ENCODE measurements at regions of chr12 and their contacts with region 1.

Region 1: DNA sequence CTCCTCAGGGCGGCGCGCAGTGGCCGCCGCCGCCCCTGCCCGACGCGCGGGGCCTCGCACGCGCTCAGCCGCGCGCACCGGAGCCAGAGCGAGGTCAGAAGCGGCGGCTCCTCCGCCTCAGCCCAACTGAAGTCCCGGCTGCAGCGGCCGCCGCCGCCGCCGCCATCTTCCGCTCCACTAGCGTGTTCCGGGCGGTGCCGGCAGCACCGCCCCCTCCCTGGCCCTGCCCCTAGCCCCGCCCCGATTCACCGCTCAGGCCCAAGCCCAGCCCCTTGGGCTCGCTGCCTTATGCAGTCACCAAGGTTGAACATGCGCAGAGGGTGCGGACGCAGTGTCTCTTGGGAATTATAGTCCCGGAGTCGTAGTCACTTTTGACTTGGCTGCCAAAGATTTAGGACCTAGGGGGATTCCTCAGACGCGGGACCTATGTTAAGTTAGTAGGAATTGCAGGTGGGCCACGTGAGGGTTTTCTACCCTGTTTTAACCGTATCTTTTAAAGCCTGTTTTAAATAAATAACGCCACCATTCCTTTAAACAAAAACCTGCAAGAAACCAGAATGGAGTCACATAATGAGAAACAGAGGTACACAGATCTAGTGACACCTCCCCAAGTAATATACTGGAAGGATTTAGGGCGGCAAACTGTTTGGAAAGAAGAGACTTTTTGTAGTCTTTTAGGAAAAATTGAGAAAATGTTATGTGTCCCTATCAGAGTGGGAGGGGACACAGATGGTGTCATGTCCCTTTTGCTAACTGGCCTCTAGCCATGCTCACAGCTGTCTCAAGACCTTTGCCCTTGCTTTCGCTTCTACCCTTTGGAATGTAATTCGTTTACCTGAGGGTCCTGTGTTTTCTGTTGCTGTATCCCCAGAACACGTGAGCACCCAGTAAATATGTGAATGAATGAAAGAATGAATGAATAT is at the start of gene PPTC7:
- DNase-seq: peak; percentile 85
- ATAC-seq: peak; percentile 93
- H3K4me3 Mint-ChIP-seq: peak within 1 kb of the TSS; percentile 90
- H3K27ac Mint-ChIP-seq: peak within 1 kb of the TSS; percentile 87
- H3K4me1 Mint-ChIP-seq: peaks cover 70% of the 10 kb centered on the region
- H3K27me3 Mint-ChIP-seq: no peaks in the 10 kb centered on the region
- CTCF ChIP-seq: no peak
- total RNA-seq, gene PPTC7: 34.5 and 40.8 TPM in 2 replicates

Region 2: DNA sequence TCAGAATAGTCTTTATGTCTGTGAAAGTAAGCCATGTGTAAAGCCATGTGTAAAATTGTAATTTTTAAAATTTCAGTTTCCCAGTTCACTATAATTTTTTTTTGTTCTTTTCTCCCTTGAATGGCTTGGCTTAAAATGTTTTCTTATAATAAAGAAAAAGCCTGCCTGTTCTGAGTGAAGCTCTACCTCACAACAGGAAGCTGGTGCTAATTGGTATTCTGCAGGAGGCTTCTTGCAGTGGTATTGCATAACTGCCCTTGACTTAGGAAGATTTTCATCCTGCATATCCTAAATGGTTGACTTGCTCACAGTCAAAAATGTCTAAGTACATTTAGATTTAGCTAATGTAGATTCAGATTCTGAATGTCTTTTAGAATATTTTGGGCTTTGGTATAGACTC is 252.9 kb before region 1 on chr12:
- CTCF ChIA-PET with region 1: no interaction called
- POLR2A ChIA-PET with region 1: no interaction called
- intact Hi-C with region 1: no loop called
- DNase-seq: no peak
- ATAC-seq: no peak
- H3K4me3 Mint-ChIP-seq: no peak overlapping the region
- H3K27ac Mint-ChIP-seq: no peak overlapping the region
- H3K4me1 Mint-ChIP-seq: no peaks in the 10 kb centered on the region
- H3K27me3 Mint-ChIP-seq: no peaks in the 10 kb centered on the region
- CTCF ChIP-seq: no peak

Region 3: DNA sequence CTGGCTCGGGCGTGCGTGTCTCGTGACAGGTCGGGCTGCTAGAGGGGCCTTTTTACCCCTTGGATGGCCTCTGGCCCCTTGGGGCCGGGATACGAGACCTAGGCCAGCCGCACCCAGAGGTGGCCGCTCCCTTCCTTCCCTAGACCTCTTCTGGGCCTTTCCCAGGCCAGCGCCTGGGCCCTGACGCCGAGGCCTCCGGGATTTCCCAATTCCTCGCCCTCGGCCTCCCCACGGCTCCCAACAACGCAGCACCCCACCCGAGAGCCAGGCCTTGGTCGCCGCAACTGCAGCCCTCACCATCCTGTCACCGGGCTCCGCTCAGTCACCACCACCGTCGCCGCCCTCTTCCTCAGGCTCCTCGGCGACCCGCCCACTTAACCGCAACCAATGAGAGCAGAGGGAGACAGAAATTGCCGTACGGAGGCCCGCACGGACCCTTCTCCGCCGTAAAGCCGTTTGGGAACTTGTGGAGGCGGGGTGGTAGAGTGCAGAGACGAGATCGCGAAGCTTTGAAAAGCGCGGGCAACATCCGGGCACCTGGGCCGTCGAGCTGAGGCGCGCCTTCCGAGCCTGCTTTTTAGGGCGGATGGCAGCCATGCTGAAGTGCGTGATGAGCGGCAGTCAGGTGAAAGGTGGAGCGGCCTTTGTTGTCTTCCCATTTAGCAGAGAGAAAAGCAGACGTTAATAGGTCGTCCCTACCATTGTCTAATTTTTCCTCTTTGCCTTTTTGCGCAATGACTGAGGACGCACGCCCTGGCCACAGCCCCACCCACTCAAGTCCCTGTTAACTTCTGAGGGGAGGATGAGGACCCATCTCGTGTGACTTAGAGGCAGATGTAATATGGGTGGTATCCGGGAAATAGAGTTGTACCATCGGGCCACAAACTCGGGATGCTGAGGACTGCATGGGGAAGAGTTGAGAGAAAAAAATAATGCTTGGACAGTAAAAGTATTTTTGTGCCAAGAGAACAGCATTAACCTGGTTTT is 81.4 kb before region 1 on chr12 and contains the starts of genes RAD9B and VPS29:
- CTCF ChIA-PET with region 1: interaction called, 3 read pairs
- POLR2A ChIA-PET with region 1: interaction called, 7 read pairs
- intact Hi-C with region 1: loop called (anchors 1 kb)
- DNase-seq: peak; percentile 95
- ATAC-seq: peak; percentile 95
- H3K4me3 Mint-ChIP-seq: peak within 1 kb of the TSS; percentile 99
- H3K27ac Mint-ChIP-seq: peak within 1 kb of the TSS; percentile 96
- H3K4me1 Mint-ChIP-seq: peaks cover 36% of the 10 kb centered on the region
- H3K27me3 Mint-ChIP-seq: no peaks in the 10 kb centered on the region
- CTCF ChIP-seq: no peak
- total RNA-seq, gene RAD9B: 1.2 and 1.3 TPM in 2 replicates
- total RNA-seq, gene VPS29: 99.6 and 117 TPM in 2 replicates

Region 4: GRCh38 chr12:110555577-110556406 is 27.6 kb before region 1 on chr12:
- CTCF ChIA-PET with region 1: interaction called, 3 read pairs
- POLR2A ChIA-PET with region 1: interaction called, 50 read pairs
- intact Hi-C with region 1: loop called (anchors 2 kb)
- DNase-seq: no peak
- ATAC-seq: no peak
- H3K4me3 Mint-ChIP-seq: no peak overlapping the region
- H3K27ac Mint-ChIP-seq: no peak overlapping the region
- H3K4me1 Mint-ChIP-seq: peaks cover 63% of the 10 kb centered on the region
- H3K27me3 Mint-ChIP-seq: no peaks in the 10 kb centered on the region
- CTCF ChIP-seq: no peak

Region 5: GRCh38 chr12:110613771-110614684 is 30.6 kb after region 1 on chr12 and contains the start of gene TCTN1:
- CTCF ChIA-PET with region 1: no interaction called
- POLR2A ChIA-PET with region 1: interaction called, 6 read pairs
- intact Hi-C with region 1: loop called (anchors 1 kb)
- DNase-seq: peak; percentile 95
- ATAC-seq: peak; percentile 98
- H3K4me3 Mint-ChIP-seq: peak within 1 kb of the TSS; percentile 89
- H3K27ac Mint-ChIP-seq: peak within 1 kb of the TSS; percentile 94
- H3K4me1 Mint-ChIP-seq: peaks cover 57% of the 10 kb centered on the region
- H3K27me3 Mint-ChIP-seq: no peaks in the 10 kb centered on the region
- CTCF ChIP-seq: no peak
- total RNA-seq, gene TCTN1: 22.4 and 29.5 TPM in 2 replicates